ENCODE measurements at regions of chr16 and their contacts with region 1.

Region 1: DNA sequence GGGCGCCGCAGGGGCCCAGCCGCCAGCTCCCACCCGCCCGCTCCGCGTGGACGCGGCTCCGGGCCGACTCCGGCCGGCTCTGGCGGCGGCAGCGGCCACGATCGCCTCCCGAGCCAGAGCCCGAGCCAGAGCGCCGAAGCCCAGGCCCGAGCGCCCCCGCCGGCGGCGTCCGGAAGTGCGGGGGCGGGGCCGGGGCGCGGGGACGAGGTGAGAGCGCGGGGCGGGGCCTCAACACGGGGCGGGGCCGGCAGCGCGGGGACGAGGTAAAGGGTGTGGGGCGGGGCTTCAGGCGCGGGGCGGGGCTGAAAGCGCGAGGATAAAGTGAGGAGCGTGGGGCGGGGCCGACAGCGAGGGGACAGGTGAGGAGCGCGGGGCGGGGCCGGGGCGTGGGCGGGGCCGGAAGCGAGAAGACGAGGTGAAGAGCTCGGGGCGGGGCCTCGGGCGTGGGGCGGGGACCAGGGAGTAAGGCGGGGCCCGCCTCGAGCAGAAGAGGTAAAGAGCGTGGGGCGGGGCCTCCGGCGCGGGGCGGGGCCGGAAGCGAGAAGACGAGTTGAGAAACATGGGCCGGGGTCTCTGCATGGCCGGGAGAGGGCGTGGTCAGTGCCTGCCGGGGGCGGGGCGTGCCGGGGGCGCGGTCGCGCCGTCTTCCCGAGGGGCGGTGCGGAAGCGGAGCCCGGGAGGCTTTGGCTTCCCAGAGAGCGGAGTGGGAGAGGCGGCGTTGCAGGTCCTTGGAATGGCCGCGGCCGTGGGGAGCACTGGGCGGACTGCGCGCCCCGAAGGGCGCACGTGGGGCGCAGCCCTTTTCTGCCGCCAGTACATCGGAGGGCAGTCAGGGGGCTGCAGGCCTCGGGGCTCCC is at the start of gene AXIN1:
- DNase-seq: peak; percentile 98 to 100 (median 100)
- ATAC-seq: peak; percentile 86
- H3K4me3 ChIP-seq: peak within 1 kb of the TSS; percentile 57
- H3K4me3 Mint-ChIP-seq: peak within 1 kb of the TSS; percentile 99
- H3K27ac ChIP-seq: peak within 1 kb of the TSS; percentile 35 to 50
- H3K27ac Mint-ChIP-seq: peak within 1 kb of the TSS; percentile 94
- H3K4me1 ChIP-seq: peaks cover 74% of the 10 kb centered on the region
- H3K4me1 Mint-ChIP-seq: peaks cover 61% of the 10 kb centered on the region
- H3K27me3 ChIP-seq: no peaks in the 10 kb centered on the region
- H3K27me3 Mint-ChIP-seq: no peaks in the 10 kb centered on the region
- CTCF ChIP-seq: no peak
- total RNA-seq, gene AXIN1: 24.7 to 26.3 TPM

Region 2: GRCh38 chr16:228818-229730 is 123.7 kb before region 1 on chr16 and contains the start of gene LUC7L:
- CTCF ChIA-PET with region 1: interaction called, 3 read pairs
- POLR2A ChIA-PET with region 1: interaction called, 12 read pairs
- intact Hi-C with region 1: loop called (anchors 1 to 2 kb)
- DNase-seq: peak; percentile 75 to 92 (median 80)
- ATAC-seq: peak; percentile 86
- H3K4me3 ChIP-seq: peak within 1 kb of the TSS; percentile 96
- H3K4me3 Mint-ChIP-seq: peak within 1 kb of the TSS; percentile 90
- H3K27ac ChIP-seq: peak within 1 kb of the TSS; percentile 86 to 91
- H3K27ac Mint-ChIP-seq: peak within 1 kb of the TSS; percentile 86
- H3K4me1 ChIP-seq: peaks cover 24% of the 10 kb centered on the region
- H3K4me1 Mint-ChIP-seq: peaks cover 39% of the 10 kb centered on the region
- H3K27me3 ChIP-seq: no peaks in the 10 kb centered on the region
- H3K27me3 Mint-ChIP-seq: no peaks in the 10 kb centered on the region
- CTCF ChIP-seq: no peak
- total RNA-seq, gene LUC7L: 94.8 to 98.4 TPM

Region 3: GRCh38 chr16:243348-243747 is 109.4 kb before region 1 on chr16:
- CTCF ChIA-PET with region 1: no interaction called
- POLR2A ChIA-PET with region 1: no interaction called
- intact Hi-C with region 1: no loop called
- DNase-seq: no peak
- ATAC-seq: no peak
- H3K4me3 ChIP-seq: no peak overlapping the region
- H3K4me3 Mint-ChIP-seq: no peak overlapping the region
- H3K27ac ChIP-seq: no peak overlapping the region
- H3K27ac Mint-ChIP-seq: no peak overlapping the region
- H3K4me1 ChIP-seq: peaks cover 4% of the 10 kb centered on the region
- H3K4me1 Mint-ChIP-seq: peaks cover 4% of the 10 kb centered on the region
- H3K27me3 ChIP-seq: no peaks in the 10 kb centered on the region
- H3K27me3 Mint-ChIP-seq: no peaks in the 10 kb centered on the region
- CTCF ChIP-seq: no peak

Region 4: DNA sequence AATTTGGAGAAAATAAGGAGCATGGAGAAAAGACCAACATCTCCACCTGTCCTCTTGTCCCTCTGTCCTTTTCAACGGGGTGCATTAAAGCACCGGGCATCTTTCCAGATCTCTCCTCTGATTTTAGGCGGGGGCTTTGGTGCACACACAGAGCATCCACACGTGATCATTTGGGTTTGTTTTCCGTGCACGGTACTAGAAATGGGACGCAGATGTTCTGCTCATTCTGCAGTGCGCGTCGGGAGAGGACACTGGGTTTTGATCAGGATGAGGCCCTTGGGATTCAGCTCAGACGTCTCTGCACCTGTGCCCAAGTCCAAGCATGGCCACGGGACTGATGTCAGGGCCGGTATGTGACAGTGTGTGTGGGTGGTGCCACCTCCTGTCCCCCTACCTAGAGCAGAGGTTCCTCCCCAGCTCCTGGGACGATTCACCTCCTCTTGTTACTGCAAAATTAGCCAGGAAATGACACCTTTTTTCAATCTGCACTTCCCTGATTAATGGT is 37.9 kb before region 1 on chr16:
- CTCF ChIA-PET with region 1: no interaction called
- POLR2A ChIA-PET with region 1: no interaction called
- intact Hi-C with region 1: loop called in 1 of 2 experiments (anchors 5 kb)
- DNase-seq: no peak
- ATAC-seq: no peak
- H3K4me3 ChIP-seq: no peak overlapping the region
- H3K4me3 Mint-ChIP-seq: no peak overlapping the region
- H3K27ac ChIP-seq: no peak overlapping the region
- H3K27ac Mint-ChIP-seq: peak overlapping the region; percentile 21
- H3K4me1 ChIP-seq: peaks cover 34% of the 10 kb centered on the region
- H3K4me1 Mint-ChIP-seq: peaks cover 31% of the 10 kb centered on the region
- H3K27me3 ChIP-seq: no peaks in the 10 kb centered on the region
- H3K27me3 Mint-ChIP-seq: no peaks in the 10 kb centered on the region
- CTCF ChIP-seq: no peak

Region 5: DNA sequence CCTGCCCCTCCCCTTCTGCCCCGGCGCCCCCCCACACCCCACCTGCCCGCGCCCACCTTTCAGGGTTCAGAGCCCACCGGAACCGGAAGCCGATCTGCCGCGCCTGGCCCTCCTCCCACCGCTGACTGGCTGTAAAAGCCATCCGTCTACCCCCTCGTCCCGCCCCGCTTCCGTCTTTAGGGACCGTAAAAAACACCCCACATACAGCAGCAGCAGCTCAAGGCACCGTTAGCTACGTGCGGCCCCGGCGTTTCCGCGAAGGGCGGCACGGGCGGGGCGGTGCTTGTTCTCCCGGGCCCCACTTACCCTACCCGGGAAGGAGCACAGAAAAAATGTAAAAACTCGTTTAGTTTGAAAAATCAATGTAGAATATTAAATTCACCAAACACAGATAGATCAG is 17.7 kb after region 1 on chr16 and contains the start of gene MRPL28:
- CTCF ChIA-PET with region 1: no interaction called
- POLR2A ChIA-PET with region 1: interaction called, 16 read pairs
- intact Hi-C with region 1: loop called in 1 of 2 experiments (anchors 1 kb)
- DNase-seq: peak; percentile 85 to 96 (median 92)
- ATAC-seq: peak; percentile 100
- H3K4me3 ChIP-seq: peak within 1 kb of the TSS; percentile 30
- H3K4me3 Mint-ChIP-seq: peak within 1 kb of the TSS; percentile 95
- H3K27ac ChIP-seq: peak within 1 kb of the TSS; percentile 23 to 60
- H3K27ac Mint-ChIP-seq: peak within 1 kb of the TSS; percentile 83
- H3K4me1 ChIP-seq: peaks cover 22% of the 10 kb centered on the region
- H3K4me1 Mint-ChIP-seq: peaks cover 17% of the 10 kb centered on the region
- H3K27me3 ChIP-seq: no peaks in the 10 kb centered on the region
- H3K27me3 Mint-ChIP-seq: no peaks in the 10 kb centered on the region
- CTCF ChIP-seq: no peak
- total RNA-seq, gene MRPL28: 19.6 to 19.7 TPM

Region 6: GRCh38 chr16:401468-402348 is 48.9 kb after region 1 on chr16 and contains the start of gene DECR2:
- CTCF ChIA-PET with region 1: no interaction called
- POLR2A ChIA-PET with region 1: interaction called, 4 read pairs
- intact Hi-C with region 1: loop called (anchors 2 to 5 kb)
- DNase-seq: peak; percentile 94 to 100 (median 99)
- ATAC-seq: peak; percentile 84
- H3K4me3 ChIP-seq: peak within 1 kb of the TSS; percentile 92
- H3K4me3 Mint-ChIP-seq: peak within 1 kb of the TSS; percentile 98
- H3K27ac ChIP-seq: peak within 1 kb of the TSS; percentile 67 to 81
- H3K27ac Mint-ChIP-seq: peak within 1 kb of the TSS; percentile 97
- H3K4me1 ChIP-seq: peaks cover 21% of the 10 kb centered on the region
- H3K4me1 Mint-ChIP-seq: peaks cover 18% of the 10 kb centered on the region
- H3K27me3 ChIP-seq: no peaks in the 10 kb centered on the region
- H3K27me3 Mint-ChIP-seq: no peaks in the 10 kb centered on the region
- CTCF ChIP-seq: peak; percentile 68
- total RNA-seq, gene DECR2: 5.7 to 7.0 TPM

Measured in CD4-positive, alpha-beta T cell (primary cell).